Caco-2 (cell line): ENCODE measurements at regions of chr20 and their contacts with region 1.

Region 1: DNA sequence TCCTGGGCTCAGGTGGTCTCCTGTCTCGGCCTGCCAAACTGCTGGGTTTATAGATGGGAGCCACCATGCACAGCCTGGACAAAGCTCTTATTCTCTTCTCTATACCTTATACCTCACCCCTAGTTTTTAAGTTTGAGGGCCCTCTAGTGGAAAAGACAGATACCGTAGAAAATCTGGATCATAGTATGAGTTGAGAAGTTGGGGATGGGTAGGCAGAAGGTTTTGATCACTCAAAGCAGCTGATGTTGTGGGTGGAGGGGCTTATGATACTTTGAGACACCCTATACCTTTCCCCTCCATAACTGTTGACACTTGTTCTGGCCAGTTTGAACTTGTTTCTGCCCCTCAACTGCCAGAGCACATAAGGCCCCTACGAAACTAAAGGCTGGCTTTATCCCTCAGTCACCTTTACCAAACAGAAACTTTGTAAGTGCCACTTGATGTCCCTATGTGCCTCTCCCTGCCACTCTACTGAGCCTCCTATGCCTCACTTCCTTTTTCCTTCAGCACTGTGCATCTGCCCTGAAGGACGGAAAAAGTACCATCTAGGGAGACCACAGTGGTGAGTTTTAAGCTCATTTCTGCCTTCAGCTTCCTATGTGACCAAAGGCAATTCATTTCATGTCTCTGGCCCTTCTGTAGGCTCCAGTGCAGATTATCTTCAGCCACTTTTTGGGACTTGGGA is 28.6 kb downstream of the RALY start:
- DNase-seq: peak in 1 of 2 experiments; percentile 65
- H3K4me3 ChIP-seq: no peak overlapping the region
- H3K4me3 Mint-ChIP-seq: no peak overlapping the region
- H3K27ac Mint-ChIP-seq: no peak overlapping the region
- H3K4me1 ChIP-seq: no peaks in the 10 kb centered on the region
- H3K4me1 Mint-ChIP-seq: peaks cover 14% of the 10 kb centered on the region
- H3K27me3 ChIP-seq: no peaks in the 10 kb centered on the region
- H3K27me3 Mint-ChIP-seq: no peaks in the 10 kb centered on the region
- CTCF ChIP-seq: peak; percentile 51 to 72

Region 2: GRCh38 chr20:33862709-33863403 is 159.4 kb before region 1 on chr20:
- CTCF ChIA-PET with region 1: interaction called, 13 read pairs
- POLR2A ChIA-PET with region 1: no interaction called
- intact Hi-C with region 1: loop called (anchors 2 kb)
- DNase-seq: peak; percentile 77 to 83
- H3K4me3 ChIP-seq: no peak overlapping the region
- H3K4me3 Mint-ChIP-seq: no peak overlapping the region
- H3K27ac Mint-ChIP-seq: no peak overlapping the region
- H3K4me1 ChIP-seq: no peaks in the 10 kb centered on the region; the same call in 1 of the 2 replicates
- H3K4me1 Mint-ChIP-seq: peaks cover 12% of the 10 kb centered on the region
- H3K27me3 ChIP-seq: no peaks in the 10 kb centered on the region
- H3K27me3 Mint-ChIP-seq: no peaks in the 10 kb centered on the region
- CTCF ChIP-seq: peak; percentile 60 to 75

Region 3: DNA sequence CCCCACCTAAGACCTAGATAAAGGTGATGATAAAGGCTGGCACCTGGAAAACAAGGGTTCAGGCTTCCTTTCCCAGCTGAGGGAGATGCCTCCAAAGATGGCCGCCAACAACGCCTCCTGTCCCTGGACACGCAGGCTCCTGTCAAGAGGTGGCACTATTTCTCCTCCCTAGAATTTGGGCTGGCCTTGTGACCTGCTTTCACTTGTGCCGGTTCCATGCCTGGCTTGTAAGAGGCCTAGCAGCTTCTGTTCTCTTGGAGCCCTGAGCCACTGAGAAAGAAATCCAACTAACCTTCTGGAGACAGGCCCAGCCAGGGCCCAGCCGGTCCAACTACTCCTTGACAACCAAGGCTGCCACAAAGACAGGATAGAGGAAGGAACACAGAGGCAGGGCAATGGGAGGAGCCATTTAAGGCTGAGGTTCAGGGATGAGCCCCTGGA is 88.8 kb before region 1 on chr20:
- CTCF ChIA-PET with region 1: interaction called, 10 read pairs
- POLR2A ChIA-PET with region 1: no interaction called
- intact Hi-C with region 1: loop called (anchors 1 kb)
- DNase-seq: peak; percentile 81 to 86
- H3K4me3 ChIP-seq: no peak overlapping the region
- H3K4me3 Mint-ChIP-seq: no peak overlapping the region
- H3K27ac Mint-ChIP-seq: no peak overlapping the region
- H3K4me1 ChIP-seq: no peaks in the 10 kb centered on the region
- H3K4me1 Mint-ChIP-seq: no peaks in the 10 kb centered on the region
- H3K27me3 ChIP-seq: no peaks in the 10 kb centered on the region
- H3K27me3 Mint-ChIP-seq: no peaks in the 10 kb centered on the region
- CTCF ChIP-seq: peak; percentile 56 to 88

Region 4: DNA sequence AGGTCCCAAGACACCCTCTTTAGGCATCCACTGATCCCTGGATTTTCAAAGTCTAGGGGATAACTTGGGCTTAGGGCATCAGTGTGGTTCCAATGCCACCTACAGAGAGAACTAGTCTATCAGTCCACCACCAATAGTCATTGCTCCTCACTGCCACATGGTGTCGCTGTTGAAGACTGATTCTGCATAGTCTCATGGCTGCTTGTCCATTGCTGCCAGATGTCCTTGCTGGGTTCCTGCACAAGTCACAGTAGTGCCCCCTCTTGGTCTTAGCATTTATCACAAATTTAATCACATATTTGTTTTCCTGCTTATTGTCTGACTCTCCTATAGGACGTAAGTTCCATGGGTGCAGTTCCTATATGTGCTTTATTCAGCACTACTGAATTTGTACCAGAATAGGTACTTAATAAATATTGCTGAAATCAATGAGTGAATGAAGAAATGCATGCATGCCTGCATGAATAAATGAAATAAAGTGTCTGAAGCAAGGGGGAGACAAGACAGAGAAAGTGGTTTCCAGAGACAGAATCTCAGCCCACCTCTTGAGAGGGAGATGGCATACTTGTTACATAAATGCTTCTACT is 74.5 kb before region 1 on chr20:
- CTCF ChIA-PET with region 1: interaction called, 3 read pairs
- POLR2A ChIA-PET with region 1: no interaction called
- intact Hi-C with region 1: loop called (anchors 1 kb)
- DNase-seq: peak; percentile 72 to 75
- H3K4me3 ChIP-seq: no peak overlapping the region
- H3K4me3 Mint-ChIP-seq: no peak overlapping the region
- H3K27ac Mint-ChIP-seq: no peak overlapping the region
- H3K4me1 ChIP-seq: no peaks in the 10 kb centered on the region
- H3K4me1 Mint-ChIP-seq: no peaks in the 10 kb centered on the region
- H3K27me3 ChIP-seq: no peaks in the 10 kb centered on the region
- H3K27me3 Mint-ChIP-seq: peaks cover 2% of the 10 kb centered on the region
- CTCF ChIP-seq: peak; percentile 82 to 83

Region 5: GRCh38 chr20:34045294-34045693 is 23.0 kb after region 1 on chr20:
- CTCF ChIA-PET with region 1: interaction called, 3 read pairs
- POLR2A ChIA-PET with region 1: interaction called, 9 read pairs
- intact Hi-C with region 1: loop called (anchors 2 kb)
- DNase-seq: peak in 1 of 2 experiments; percentile 32
- H3K4me3 ChIP-seq: no peak overlapping the region
- H3K4me3 Mint-ChIP-seq: no peak overlapping the region
- H3K27ac Mint-ChIP-seq: peak overlapping the region; percentile 17
- H3K4me1 ChIP-seq: peaks cover 42% of the 10 kb centered on the region
- H3K4me1 Mint-ChIP-seq: peaks cover 32% of the 10 kb centered on the region
- H3K27me3 ChIP-seq: no peaks in the 10 kb centered on the region
- H3K27me3 Mint-ChIP-seq: no peaks in the 10 kb centered on the region
- CTCF ChIP-seq: no peak

Region 6: DNA sequence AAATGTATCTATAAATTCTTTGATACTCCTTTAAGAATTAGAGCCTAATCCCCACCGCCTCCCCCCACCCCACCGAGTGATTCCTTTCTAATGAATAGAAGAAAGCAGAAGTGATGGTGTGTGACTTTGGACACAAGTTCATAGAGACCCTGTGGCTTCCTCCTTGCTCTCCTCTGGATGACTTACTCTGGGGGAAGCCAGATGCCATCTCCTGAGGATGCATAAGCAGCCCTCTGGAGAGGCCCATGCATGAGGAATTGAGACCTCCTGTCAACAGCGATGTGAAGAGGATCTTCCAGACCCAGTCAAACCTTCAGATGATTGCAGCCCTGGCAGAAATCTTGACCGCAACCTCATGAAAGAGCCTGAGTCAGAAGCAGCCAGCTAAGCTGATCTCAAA is 259.7 kb after region 1 on chr20:
- CTCF ChIA-PET with region 1: no interaction called
- POLR2A ChIA-PET with region 1: interaction called, 10 read pairs
- intact Hi-C with region 1: no loop called
- DNase-seq: no peak
- H3K4me3 ChIP-seq: no peak overlapping the region
- H3K4me3 Mint-ChIP-seq: no peak overlapping the region
- H3K27ac Mint-ChIP-seq: no peak overlapping the region
- H3K4me1 ChIP-seq: no peaks in the 10 kb centered on the region
- H3K4me1 Mint-ChIP-seq: no peaks in the 10 kb centered on the region
- H3K27me3 ChIP-seq: no peaks in the 10 kb centered on the region
- H3K27me3 Mint-ChIP-seq: no peaks in the 10 kb centered on the region
- CTCF ChIP-seq: no peak